Adrenal gland (tissue), 19 donors: ENCODE measurements at regions of chr17 and their contacts with region 1.

Region 1: DNA sequence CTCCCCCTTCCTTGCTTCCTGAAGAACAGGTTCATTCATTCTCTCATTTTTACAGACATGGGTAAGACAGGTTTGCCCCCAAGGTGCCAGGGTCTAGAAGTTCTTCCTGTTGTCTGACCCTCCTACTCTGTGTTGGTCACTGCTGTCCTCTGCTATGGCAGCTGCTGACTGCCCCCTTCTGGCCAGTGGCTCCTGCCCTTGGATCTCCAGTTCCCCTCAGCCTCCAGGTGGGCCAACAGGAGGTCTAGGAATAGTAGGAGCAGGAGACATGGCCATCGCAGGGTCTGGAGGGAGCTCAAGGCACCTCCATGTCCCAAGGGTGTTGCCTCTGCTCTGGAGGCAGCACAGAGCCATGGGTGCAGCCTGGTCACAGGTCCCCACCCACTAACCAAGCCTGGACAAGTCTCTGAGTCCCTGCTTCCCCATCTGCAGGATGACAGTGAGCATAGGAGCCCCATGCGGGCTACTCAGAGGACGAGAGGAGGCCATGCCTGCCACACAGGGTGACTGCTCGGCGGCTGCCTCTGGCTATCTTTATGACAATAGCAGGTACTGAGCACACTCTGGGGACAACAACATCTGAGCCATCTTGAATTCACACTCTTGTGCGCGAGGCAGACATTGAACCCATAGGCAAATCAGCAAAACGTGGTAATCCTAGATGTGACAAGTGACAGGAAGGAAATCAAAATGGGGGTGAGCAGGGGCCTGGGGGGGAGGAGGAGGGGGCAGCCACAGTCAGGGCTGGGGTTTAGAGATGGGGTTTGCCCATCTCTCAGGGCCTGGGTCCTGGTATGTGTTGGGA is 27.0 kb upstream of the NXPH3 start:
- DNase-seq: peak in 3 of 7 donors; percentile 41 to 66 (median 61)
- H3K4me3 ChIP-seq: no peak overlapping the region
- H3K27ac ChIP-seq: no peak overlapping the region
- H3K4me1 ChIP-seq: no peaks in the 10 kb centered on the region
- H3K27me3 ChIP-seq: no peaks in the 10 kb centered on the region
- CTCF ChIP-seq: peak; percentile 26 to 57 (median 48)
- POLR2A ChIP-seq: no peak

Region 2: DNA sequence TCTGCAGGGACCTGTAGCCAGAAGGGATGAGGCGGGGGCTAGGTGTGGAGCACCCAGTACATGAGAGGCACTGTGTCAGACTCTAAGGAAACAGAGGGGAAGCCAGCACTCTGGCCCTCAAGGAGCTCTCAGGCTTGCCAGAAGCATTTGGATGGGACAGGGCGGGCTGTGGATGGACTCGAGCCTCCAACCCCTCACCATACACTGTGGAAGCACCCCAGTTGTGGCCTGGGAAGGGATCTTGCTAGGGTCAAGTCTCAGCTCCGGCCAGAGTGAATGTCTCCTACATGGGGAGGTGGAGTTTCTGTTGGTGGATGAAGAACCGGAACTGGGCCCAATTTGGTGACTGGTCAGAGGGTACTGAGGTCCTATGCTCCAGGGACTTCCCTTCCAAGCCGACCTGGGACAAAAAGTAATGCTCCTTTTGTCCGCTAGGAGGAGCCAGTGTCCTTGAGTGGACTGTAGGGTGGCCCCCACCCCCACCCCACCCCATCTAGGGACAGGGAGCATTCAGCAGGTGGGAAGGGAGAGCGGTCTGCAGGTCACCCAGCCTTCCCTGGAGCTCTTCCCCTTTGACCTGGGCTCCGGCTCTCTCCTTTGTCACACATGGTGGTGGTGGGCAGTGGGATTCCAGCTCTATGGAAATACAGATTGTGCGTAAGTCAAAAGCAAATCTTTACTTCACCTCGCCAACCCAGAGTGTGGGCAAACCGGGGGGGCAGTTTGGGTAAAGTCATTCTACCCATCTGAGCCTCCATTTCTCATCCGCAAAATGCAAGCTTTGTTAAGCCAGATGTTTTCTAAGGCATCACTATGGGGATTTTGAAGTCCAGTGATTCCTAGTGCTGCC is 113.7 kb before region 1 on chr17:
- intact Hi-C with region 1: loop called (anchors 2 to 10 kb)
- DNase-seq: peak; percentile 38 to 74 (median 44)
- H3K4me3 ChIP-seq: no peak overlapping the region
- H3K27ac ChIP-seq: no peak overlapping the region
- H3K4me1 ChIP-seq: no peaks in the 10 kb centered on the region
- H3K27me3 ChIP-seq: peaks cover 7% of the 10 kb centered on the region
- CTCF ChIP-seq: peak; percentile 33 to 65 (median 56)
- POLR2A ChIP-seq: no peak

Region 3: DNA sequence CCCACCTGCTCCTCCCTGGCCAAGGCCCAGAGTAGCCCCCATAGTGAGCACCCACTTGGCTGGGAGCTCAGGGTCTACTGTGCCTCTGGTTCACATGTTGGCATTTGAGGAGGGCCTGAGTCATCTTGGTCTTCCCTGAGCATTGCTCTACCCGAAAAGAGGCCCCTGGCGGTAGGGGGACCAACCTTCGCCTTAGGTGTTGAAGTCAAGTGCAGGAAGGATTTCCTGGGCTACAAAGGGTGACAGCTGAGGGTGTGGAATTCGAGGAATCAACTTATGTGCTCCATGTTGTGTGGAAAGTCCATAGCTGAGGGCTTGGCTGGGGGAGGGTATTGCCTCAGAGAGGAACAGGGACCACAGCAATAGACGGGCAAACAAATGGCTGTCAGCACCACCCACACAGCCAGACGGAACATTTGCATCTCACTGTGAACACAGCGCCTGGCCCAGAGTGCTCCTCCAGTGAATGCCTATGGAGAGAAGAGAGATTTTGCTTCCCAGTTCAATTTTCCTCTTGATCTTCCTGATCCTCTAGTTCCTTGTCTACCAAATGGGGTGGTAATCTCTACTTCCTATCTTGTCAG is 89.2 kb before region 1 on chr17:
- intact Hi-C with region 1: no loop called
- DNase-seq: no peak
- H3K4me3 ChIP-seq: no peak overlapping the region
- H3K27ac ChIP-seq: no peak overlapping the region
- H3K4me1 ChIP-seq: no peaks in the 10 kb centered on the region
- H3K27me3 ChIP-seq: peaks cover 23% of the 10 kb centered on the region
- CTCF ChIP-seq: no peak
- POLR2A ChIP-seq: no peak

Region 4: DNA sequence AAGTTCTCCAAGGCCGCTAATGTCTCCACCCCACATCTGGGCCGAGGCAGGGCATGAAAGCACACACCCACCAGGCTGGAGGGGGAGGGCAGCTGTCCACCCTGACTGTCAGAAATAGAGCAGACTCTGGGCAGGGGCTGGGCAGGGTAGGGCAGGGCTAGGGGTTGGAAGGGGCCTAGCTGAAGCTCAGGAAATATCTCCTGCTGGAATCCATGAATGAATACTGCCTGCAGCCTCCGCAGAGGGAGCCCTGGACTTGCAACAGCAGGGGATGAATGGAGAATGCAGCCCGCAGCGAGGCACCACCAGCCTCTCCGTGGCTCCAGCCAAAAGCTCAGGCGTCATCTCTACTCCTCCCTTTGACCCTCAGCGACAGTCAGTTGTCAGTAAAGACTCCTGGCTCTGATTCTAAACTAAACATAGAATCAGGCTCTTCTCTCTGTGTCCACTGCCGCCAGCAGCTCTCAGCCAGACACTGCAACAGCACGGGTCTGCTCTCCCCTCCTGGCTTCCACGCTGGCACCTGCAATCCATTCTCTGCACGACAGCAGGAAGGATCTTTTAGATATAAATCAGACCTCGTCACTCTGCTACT is 77.5 kb before region 1 on chr17:
- intact Hi-C with region 1: no loop called
- DNase-seq: peak in 5 of 7 donors; percentile 22 to 59 (median 41)
- H3K4me3 ChIP-seq: no peak overlapping the region
- H3K27ac ChIP-seq: peak overlapping the region in 1 of 5 donors; percentile 45
- H3K4me1 ChIP-seq: peaks cover 4 to 22% of the 10 kb centered on the region in 2 donors
- H3K27me3 ChIP-seq: peaks cover 22% of the 10 kb centered on the region
- CTCF ChIP-seq: no peak
- POLR2A ChIP-seq: no peak

Region 5: GRCh38 chr17:49496183-49496866 is 52.4 kb before region 1 on chr17:
- intact Hi-C with region 1: loop called (anchors 2 to 10 kb)
- DNase-seq: peak; percentile 35 to 84 (median 76)
- H3K4me3 ChIP-seq: peak overlapping the region in 2 of 4 donors; percentile 26 to 50
- H3K27ac ChIP-seq: peak overlapping the region in 1 of 5 donors; percentile 15
- H3K4me1 ChIP-seq: peaks cover 13 to 25% of the 10 kb centered on the region in 2 donors
- H3K27me3 ChIP-seq: peaks cover 60% of the 10 kb centered on the region
- CTCF ChIP-seq: peak; percentile 44 to 90 (median 72)
- POLR2A ChIP-seq: no peak